Activated CD4-positive, alpha-beta memory T cell treated with anti-CD3 and anti-CD28 coated beads for 36 hours (primary cell): ENCODE measurements at regions of chr2 and their contacts with region 1.

Region 1: DNA sequence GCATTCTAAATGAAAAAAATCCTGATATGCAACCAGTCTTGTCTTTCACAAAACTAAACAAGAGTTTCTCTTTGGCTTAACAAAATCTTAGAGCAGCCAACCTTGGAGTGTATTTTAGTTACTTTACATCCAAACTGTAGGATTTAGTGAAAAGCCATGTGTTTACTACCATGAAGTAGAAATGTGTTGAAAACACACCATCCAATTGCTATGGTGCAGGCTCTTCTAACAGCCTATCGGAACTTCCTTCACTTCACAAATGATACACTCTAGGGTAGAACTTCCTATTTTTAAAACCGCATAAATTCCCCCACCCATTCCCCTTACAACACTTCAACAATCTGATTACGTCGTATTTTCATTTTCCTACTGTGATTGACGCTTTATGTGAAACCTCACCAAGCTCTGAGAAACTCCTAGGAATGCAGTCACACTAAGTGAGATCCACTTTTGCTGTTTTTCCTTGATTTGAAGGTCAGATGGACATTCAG is 74.4 kb upstream of the MAP4K4 start:
- DNase-seq: no peak
- H3K4me3 Mint-ChIP-seq: peak overlapping the region; percentile 3
- H3K27ac Mint-ChIP-seq: peak overlapping the region; percentile 18
- H3K4me1 Mint-ChIP-seq: peaks cover 29% of the 10 kb centered on the region
- H3K27me3 Mint-ChIP-seq: no peaks in the 10 kb centered on the region

Region 2: GRCh38 chr2:101608408-101609317 is 14.4 kb before region 1 on chr2:
- CTCF ChIA-PET with region 1: no interaction called
- POLR2A ChIA-PET with region 1: no interaction called
- intact Hi-C with region 1: no loop called
- DNase-seq: no peak
- H3K4me3 Mint-ChIP-seq: no peak overlapping the region
- H3K27ac Mint-ChIP-seq: no peak overlapping the region
- H3K4me1 Mint-ChIP-seq: no peaks in the 10 kb centered on the region
- H3K27me3 Mint-ChIP-seq: no peaks in the 10 kb centered on the region

Region 3: GRCh38 chr2:101725515-101726192 is 102.6 kb after region 1 on chr2:
- CTCF ChIA-PET with region 1: no interaction called
- POLR2A ChIA-PET with region 1: no interaction called
- intact Hi-C with region 1: loop called (anchors 5 kb)
- DNase-seq: no peak
- H3K4me3 Mint-ChIP-seq: no peak overlapping the region
- H3K27ac Mint-ChIP-seq: no peak overlapping the region
- H3K4me1 Mint-ChIP-seq: peaks cover 88% of the 10 kb centered on the region
- H3K27me3 Mint-ChIP-seq: no peaks in the 10 kb centered on the region